ENCODE measurements at regions of chr11 and their contacts with region 1.

Region 1: GRCh38 chr11:34492806-34493414 is 20.7 kb downstream of the ELF5 start:
- DNase-seq: no peak
- ATAC-seq: peak; percentile 77
- H3K4me3 ChIP-seq: no peak overlapping the region
- H3K27ac ChIP-seq: no peak overlapping the region
- H3K4me1 ChIP-seq: peaks cover 4% of the 10 kb centered on the region; the same call in 1 of the 2 replicates
- H3K27me3 ChIP-seq: no peaks in the 10 kb centered on the region; a peak in 2 of 4 replicates
- CTCF ChIP-seq: peak; percentile 54 to 81 (median 64); a peak in 5 of 6 replicates
- EP300 ChIP-seq: no peak
- POLR2A ChIP-seq: no peak
- RAD21 ChIP-seq: peak; percentile 82

Region 2: GRCh38 chr11:33857933-33858371 is 635.0 kb before region 1 on chr11:
- CTCF ChIA-PET with region 1: interaction called, 3 read pairs
- POLR2A ChIA-PET with region 1: no interaction called
- RAD21 ChIA-PET with region 1: no interaction called
- SMC1A ChIA-PET with region 1: no interaction called
- in situ Hi-C with region 1: no loop called
- intact Hi-C with region 1: loop called (anchors 10 kb)
- DNase-seq: peak; percentile 32
- ATAC-seq: peak; percentile 99
- H3K4me3 ChIP-seq: no peak overlapping the region
- H3K27ac ChIP-seq: no peak overlapping the region
- H3K4me1 ChIP-seq: no peaks in the 10 kb centered on the region
- H3K27me3 ChIP-seq: peaks cover 0 to 2% of the 10 kb centered on the region in 2 experiments; a peak in 1 of 4 replicates
- CTCF ChIP-seq: peak; percentile 85 to 94 (median 88); a peak in 5 of 6 replicates
- EP300 ChIP-seq: no peak
- POLR2A ChIP-seq: no peak
- RAD21 ChIP-seq: peak; percentile 100

Region 3: DNA sequence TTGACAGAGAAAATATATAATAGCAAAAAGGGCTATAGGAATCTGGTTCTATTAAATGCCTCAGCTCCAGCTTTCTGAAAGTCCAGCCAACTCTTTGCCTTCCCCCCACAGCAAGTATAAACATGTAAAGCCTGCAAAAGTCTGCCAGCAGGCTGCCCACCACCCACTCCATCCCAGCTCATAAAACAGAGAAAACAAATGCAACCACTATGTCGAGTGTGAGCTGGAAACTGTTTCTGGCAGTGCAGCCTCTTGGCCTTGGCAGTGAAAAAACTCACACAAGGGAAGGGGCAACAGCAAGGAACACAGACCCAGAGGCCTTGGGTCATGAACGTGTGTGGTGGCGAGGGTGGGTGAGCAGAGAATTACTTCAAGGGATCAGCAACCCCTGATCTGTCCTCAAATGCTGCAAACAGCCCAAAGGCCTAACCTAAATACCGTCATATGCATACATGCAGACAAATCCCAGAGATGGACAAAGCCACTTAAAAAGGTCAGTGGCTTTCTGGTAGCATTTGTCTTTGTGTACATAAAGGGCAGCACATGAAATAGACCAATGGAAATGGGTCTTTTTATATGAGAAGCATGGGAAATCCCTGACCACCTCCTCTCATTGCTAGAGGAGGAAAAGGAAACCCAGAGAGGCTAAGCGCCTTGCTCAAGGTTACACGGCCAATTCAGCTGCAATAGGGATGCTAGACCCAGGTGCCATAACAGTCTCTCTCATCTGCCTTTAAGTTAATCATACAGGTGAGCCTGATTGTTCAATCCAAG is 312.7 kb before region 1 on chr11:
- CTCF ChIA-PET with region 1: interaction called, 3 read pairs
- POLR2A ChIA-PET with region 1: no interaction called
- RAD21 ChIA-PET with region 1: no interaction called
- SMC1A ChIA-PET with region 1: interaction called, 3 read pairs
- in situ Hi-C with region 1: no loop called
- intact Hi-C with region 1: loop called (anchors 5 kb)
- DNase-seq: peak; percentile 30
- ATAC-seq: peak; percentile 78
- H3K4me3 ChIP-seq: no peak overlapping the region
- H3K27ac ChIP-seq: 0 out of 2 replicates have a peak overlapping the region, but pooled peaks have one; percentile 16
- H3K4me1 ChIP-seq: peaks cover 29% of the 10 kb centered on the region
- H3K27me3 ChIP-seq: no peaks in the 10 kb centered on the region
- CTCF ChIP-seq: no peak
- EP300 ChIP-seq: no peak
- POLR2A ChIP-seq: no peak
- RAD21 ChIP-seq: no peak

Region 4: DNA sequence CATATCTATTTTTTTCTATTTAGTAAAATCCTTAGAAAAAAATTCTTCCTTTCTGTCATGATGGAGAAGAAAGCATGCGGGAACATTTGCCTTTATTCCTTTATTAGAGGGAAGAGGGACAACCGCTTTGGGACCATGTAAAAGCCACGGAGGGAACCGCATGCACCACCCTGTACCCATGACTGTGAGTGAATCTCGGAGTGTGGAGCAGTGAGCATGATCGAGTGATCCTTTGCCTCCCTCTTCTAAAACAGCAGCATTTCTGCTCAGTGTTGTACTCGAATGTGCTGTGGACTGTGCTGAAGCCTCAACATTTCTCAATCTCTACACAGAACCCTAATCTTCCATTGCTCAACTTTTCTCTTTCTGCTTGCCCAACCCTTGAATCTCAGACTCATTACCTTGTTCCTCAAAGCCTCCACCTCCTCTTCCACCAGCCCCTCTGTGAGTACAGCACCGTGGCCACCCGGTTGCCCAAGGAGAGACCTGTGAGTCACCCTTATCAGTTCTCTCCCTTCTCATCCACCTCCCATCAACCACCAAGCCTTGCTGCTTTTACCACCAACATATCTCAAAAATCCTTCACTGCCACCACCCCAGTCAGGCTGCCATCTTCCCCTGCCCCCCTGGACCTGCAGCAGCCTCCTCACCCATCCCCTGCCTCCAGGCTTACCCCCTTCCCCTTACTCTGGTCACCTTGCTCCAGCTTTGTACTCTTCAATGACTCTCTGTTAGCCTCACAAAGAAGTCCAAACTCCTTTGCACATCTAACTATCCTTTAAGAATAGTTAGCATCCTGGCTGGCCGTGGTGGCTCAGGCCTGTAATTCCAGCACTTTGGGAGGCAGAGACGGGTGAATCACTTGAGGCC is 284.4 kb before region 1 on chr11:
- CTCF ChIA-PET with region 1: no interaction called
- POLR2A ChIA-PET with region 1: no interaction called
- RAD21 ChIA-PET with region 1: no interaction called
- SMC1A ChIA-PET with region 1: no interaction called
- in situ Hi-C with region 1: no loop called
- intact Hi-C with region 1: no loop called
- DNase-seq: no peak
- ATAC-seq: 0 out of 3 replicates have a peak, but pooled peaks have one; percentile 23
- H3K4me3 ChIP-seq: no peak overlapping the region
- H3K27ac ChIP-seq: no peak overlapping the region
- H3K4me1 ChIP-seq: peaks cover 7% of the 10 kb centered on the region
- H3K27me3 ChIP-seq: no peaks in the 10 kb centered on the region
- CTCF ChIP-seq: no peak
- EP300 ChIP-seq: no peak
- POLR2A ChIP-seq: no peak
- RAD21 ChIP-seq: no peak

Region 5: GRCh38 chr11:34417202-34417601 is 75.7 kb before region 1 on chr11:
- CTCF ChIA-PET with region 1: interaction called, 10 read pairs
- POLR2A ChIA-PET with region 1: no interaction called
- RAD21 ChIA-PET with region 1: no interaction called
- SMC1A ChIA-PET with region 1: no interaction called
- in situ Hi-C with region 1: no loop called
- intact Hi-C with region 1: no loop called
- DNase-seq: no peak
- ATAC-seq: no peak
- H3K4me3 ChIP-seq: no peak overlapping the region
- H3K27ac ChIP-seq: no peak overlapping the region
- H3K4me1 ChIP-seq: no peaks in the 10 kb centered on the region
- H3K27me3 ChIP-seq: peaks cover 0 to 2% of the 10 kb centered on the region in 2 experiments; a peak in 2 of 4 replicates
- CTCF ChIP-seq: no peak
- EP300 ChIP-seq: no peak
- POLR2A ChIP-seq: no peak
- RAD21 ChIP-seq: no peak

Region 6: GRCh38 chr11:34480314-34480713 is 12.6 kb before region 1 on chr11:
- CTCF ChIA-PET with region 1: interaction called, 24 read pairs
- POLR2A ChIA-PET with region 1: no interaction called
- RAD21 ChIA-PET with region 1: interaction called, 3 read pairs
- SMC1A ChIA-PET with region 1: interaction called, 4 read pairs
- in situ Hi-C with region 1: no loop called
- intact Hi-C with region 1: no loop called
- DNase-seq: no peak
- ATAC-seq: no peak
- H3K4me3 ChIP-seq: no peak overlapping the region
- H3K27ac ChIP-seq: no peak overlapping the region
- H3K4me1 ChIP-seq: no peaks in the 10 kb centered on the region
- H3K27me3 ChIP-seq: no peaks in the 10 kb centered on the region
- CTCF ChIP-seq: no peak
- EP300 ChIP-seq: no peak
- POLR2A ChIP-seq: no peak
- RAD21 ChIP-seq: no peak

Measured in GM12878 (cell line).